Posterior vena cava (tissue), 2 donors: ENCODE measurements at regions of chr11 and their contacts with region 1.

Region 1: DNA sequence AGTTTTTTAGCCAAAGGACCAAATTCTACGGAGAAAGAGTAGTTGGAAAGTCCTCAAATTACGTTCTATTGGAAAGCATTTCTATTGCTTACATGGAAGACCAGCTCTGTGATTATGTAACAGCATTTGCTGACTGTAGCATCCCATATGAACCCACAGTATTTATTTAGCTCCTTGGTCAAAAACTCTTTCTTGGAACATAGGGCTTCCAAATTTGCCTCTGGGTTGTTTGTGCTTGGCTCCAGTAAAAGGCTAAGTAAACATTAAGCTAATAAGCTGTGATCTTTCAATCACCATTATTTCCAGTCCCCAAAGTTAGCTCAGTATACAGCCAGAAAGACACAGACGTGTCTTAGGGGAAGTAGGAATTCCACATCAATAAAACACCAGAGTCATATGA is 668.9 kb downstream of the DLG2 start:
- DNase-seq: no peak

Region 2: DNA sequence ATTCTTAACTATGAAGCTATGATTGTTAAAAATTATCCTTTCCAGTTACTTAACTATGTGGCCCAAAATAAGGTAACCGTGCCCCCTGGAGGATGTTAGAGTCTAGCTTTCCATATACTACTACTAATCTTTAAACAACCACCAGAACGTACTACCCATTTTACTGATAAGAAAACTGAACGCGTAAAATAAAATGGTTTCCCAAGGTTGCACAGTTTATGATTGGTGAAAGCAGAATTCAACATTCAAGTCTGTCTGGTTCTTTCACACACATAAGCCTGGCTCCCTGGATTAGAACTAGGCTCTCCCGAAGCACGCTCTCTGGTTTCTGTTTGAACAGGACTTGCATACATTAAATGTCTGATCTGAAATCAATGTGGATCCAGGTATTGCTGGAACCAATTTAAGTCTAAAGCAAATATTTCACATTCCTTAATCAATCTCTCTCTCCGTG is 1234.2 kb before region 1 on chr11:
- intact Hi-C with region 1: no loop called
- DNase-seq: no peak

Region 3: DNA sequence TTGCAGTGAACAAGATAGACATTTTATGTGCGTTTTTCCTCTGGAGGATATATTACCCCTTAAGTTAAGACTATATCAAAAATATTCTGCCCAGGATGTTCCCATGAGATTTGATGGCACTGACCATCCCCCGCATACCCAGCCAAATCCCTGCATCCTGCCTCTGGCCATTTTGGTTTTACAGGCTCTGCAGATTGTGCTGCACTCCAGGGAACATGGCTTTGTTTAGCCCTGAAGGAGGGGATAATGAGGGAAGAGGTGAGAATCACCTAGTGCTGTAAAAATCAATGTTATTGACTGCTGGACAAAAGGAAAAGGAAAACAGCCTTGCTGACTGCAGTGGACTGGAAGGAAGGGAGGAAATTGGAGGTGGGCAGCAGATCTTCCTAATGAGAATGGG is 48.5 kb before region 1 on chr11:
- intact Hi-C with region 1: loop called in 1 of 2 experiments (anchors 5 kb)
- DNase-seq: no peak

Region 4: DNA sequence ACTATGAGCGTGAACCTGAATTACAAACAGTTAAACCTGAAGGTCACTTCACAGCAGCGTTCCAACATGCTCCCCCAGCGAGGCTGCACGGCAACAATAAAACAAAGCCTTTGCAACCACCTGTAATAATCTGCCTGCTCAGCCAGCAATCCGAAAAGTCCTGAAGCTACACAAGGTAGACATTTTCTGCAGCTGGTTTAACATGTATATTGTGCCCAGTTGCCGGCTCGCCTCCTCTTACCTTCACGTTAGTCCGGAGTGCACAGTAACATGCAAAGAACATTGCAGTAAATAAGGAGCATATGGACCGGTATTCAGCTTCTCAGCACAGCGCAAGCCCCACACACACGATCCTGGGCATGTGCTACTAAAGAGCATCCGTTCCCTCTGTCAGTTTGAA is 35.4 kb before region 1 on chr11:
- intact Hi-C with region 1: no loop called
- DNase-seq: no peak

Region 5: DNA sequence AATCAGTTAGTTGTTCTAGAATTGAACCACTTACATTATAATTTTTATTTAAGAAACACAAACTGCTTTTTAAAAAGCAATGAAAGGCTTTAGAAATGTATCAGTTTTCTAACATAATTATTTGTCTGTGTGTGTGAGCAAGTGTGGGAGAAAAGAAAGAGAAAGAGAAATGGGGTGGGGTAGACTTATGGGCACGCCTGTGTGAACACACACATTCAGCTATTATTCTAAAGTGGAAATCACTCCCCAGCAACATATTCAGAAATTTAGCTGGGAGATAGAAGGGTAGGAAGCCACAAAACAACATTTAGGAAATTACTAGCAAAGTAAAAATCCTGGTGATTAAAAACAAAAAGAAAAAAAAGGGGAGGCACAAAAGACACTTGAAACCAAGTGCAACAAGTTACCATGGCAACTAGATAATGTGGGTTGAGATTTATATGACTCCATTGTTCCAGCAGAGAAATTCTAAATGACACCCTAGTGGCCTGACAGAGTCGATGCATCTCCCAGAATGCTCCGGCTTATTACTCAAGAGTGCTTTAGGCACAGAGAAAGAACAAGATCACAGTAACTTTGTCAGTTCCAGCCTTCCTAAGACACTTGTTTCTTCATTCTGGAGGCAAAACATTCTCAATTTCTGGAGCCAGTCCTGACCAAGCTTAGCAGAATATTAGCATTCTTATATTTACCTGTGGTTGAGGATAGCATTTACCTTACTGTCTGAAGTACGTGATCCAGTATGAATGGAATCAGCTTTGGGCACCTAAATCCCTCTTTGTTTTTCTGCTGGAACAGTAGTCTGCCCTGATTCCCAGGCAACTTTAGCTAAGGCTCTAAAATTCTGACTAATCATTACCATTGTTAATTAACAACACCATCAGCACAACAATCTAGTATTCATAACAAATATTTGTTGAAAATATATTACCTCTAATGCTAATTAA is 224.4 kb after region 1 on chr11:
- intact Hi-C with region 1: no loop called
- DNase-seq: no peak